MCF 10A (cell line): ENCODE measurements at regions of chr13 and their contacts with region 1.

Region 1: DNA sequence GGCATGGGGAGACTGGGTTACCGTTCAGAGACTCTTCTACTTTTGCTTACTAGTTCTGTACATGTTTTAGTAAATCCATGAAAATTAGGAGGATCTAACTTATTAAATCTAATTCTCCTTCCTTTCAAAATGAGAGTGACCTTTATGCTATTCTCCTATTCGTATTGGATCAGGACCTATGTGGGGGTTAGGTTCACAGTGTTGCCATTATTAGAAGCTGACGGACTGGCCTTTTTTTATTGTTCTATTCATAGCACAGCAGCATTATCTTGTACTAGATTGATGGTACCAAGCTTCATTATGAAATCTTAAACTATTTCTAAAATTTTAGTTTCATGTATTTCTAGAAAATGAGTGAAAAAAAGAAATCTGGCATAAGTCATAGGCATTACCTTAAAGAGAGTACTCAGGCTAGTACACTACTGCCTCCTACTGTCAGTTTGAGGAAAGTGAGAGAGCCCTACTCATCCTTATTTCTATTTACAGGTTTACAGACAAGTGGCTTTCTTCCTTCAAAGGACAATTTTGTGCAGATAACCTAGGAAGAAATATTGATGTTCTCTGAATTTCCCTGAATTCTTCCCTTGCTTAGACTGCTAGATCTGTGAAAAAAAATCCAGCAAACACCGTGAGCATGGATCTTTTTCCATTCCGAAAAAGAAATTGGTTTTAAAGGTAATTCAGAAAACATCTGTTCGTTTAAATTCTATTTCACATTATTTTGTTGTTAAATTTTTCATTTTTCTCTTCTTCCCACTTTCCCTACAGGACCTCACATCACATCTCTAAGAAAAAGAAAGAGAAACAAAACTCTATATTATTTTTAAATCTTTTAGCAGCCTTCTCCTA is 485.5 kb downstream of the DIAPH3 start:
- DNase-seq: peak; percentile 53
- H3K4me3 Mint-ChIP-seq: no peak overlapping the region
- H3K27ac Mint-ChIP-seq: no peak overlapping the region
- H3K4me1 Mint-ChIP-seq: no peaks in the 10 kb centered on the region
- H3K27me3 Mint-ChIP-seq: no peaks in the 10 kb centered on the region
- CTCF ChIP-seq: peak; percentile 47

Region 2: GRCh38 chr13:59166174-59166573 is 512.0 kb before region 1 on chr13:
- CTCF ChIA-PET with region 1: no interaction called
- POLR2A ChIA-PET with region 1: no interaction called
- intact Hi-C with region 1: no loop called
- DNase-seq: no peak
- H3K4me3 Mint-ChIP-seq: no peak overlapping the region
- H3K27ac Mint-ChIP-seq: no peak overlapping the region
- H3K4me1 Mint-ChIP-seq: no peaks in the 10 kb centered on the region
- H3K27me3 Mint-ChIP-seq: peaks cover 36% of the 10 kb centered on the region
- CTCF ChIP-seq: no peak

Region 3: DNA sequence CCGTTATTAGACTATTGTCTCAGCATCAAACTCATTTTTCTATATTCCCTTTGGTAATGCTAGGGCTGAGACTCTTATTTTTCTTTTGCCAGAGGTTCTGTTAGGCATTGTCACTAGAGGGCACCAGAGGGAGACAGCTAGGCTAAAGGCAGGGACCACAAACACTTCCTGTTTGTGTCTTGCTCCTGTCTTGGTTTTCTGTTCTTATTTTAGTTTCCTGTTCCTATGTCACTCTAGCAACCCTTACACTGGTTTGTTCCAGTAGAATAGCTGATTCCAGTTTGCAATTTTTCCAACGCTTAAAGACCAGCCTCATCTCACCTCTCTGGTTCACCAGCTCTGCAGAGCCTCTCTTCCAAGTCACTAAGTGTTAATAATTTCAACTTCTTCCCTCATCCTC is 286.5 kb before region 1 on chr13:
- CTCF ChIA-PET with region 1: interaction called, 49 read pairs
- POLR2A ChIA-PET with region 1: no interaction called
- intact Hi-C with region 1: loop called (anchors 1 kb)
- DNase-seq: peak; percentile 75
- H3K4me3 Mint-ChIP-seq: no peak overlapping the region
- H3K27ac Mint-ChIP-seq: no peak overlapping the region
- H3K4me1 Mint-ChIP-seq: no peaks in the 10 kb centered on the region
- H3K27me3 Mint-ChIP-seq: peaks cover 37% of the 10 kb centered on the region
- CTCF ChIP-seq: peak; percentile 71

Region 4: GRCh38 chr13:59771272-59771671 is 93.1 kb after region 1 on chr13:
- CTCF ChIA-PET with region 1: interaction called, 53 read pairs
- POLR2A ChIA-PET with region 1: no interaction called
- intact Hi-C with region 1: loop called (anchors 1 kb)
- DNase-seq: no peak
- H3K4me3 Mint-ChIP-seq: no peak overlapping the region
- H3K27ac Mint-ChIP-seq: no peak overlapping the region
- H3K4me1 Mint-ChIP-seq: peaks cover 12% of the 10 kb centered on the region
- H3K27me3 Mint-ChIP-seq: no peaks in the 10 kb centered on the region
- CTCF ChIP-seq: peak; percentile 39

Region 5: DNA sequence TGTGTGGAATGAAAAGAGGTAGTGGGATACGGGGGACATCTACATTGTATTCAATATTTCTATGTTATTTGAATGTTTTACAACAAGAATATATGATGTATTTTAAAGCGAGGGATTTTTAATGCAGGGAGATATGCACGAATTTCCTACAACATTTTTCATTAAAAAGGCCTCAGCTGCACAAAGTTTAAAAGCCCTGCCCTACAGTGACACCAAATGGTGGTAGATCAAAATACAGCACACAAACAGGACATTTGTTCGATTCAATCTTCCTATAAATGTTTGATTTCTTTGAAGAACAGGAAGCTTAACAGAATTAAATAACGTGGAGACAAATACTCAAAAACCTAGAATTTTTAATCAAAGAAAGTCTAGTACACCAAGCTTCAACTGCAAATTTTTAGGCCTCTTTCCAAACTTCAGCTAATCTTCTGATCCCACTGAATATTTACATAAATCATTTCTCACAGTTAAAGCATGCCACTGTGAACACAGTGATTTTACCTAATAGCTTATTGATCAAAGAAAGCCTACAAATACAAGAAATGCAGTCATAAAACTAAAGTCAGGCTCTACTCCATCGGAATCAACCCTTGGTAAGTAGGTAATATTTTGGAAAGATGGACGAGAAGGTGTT is 228.3 kb after region 1 on chr13:
- CTCF ChIA-PET with region 1: interaction called, 72 read pairs
- POLR2A ChIA-PET with region 1: interaction called, 4 read pairs
- intact Hi-C with region 1: loop called (anchors 1 kb)
- DNase-seq: peak; percentile 43
- H3K4me3 Mint-ChIP-seq: no peak overlapping the region
- H3K27ac Mint-ChIP-seq: no peak overlapping the region
- H3K4me1 Mint-ChIP-seq: peaks cover 6% of the 10 kb centered on the region
- H3K27me3 Mint-ChIP-seq: no peaks in the 10 kb centered on the region
- CTCF ChIP-seq: peak; percentile 50

Region 6: DNA sequence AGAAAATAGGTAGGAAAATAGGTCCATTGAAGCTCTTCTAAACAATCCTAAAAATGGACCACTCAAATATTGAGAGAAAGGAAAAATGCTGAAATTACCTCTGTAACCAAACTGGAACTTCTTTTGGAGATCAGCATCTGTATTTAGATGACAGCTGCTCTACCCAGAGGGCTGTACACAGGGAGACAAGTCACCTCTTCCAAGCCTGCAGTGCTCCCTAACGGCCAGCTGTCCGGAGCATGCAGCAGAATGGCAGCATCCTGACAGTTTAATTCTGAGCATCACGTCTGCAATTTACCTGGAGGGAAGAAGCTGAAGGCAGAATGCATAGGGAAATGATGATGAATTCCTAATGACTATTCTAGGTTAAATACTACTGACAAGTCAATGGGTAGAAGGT is 548.3 kb after region 1 on chr13:
- CTCF ChIA-PET with region 1: interaction called, 23 read pairs
- POLR2A ChIA-PET with region 1: no interaction called
- intact Hi-C with region 1: loop called (anchors 5 kb)
- DNase-seq: peak; percentile 33
- H3K4me3 Mint-ChIP-seq: no peak overlapping the region
- H3K27ac Mint-ChIP-seq: no peak overlapping the region
- H3K4me1 Mint-ChIP-seq: no peaks in the 10 kb centered on the region
- H3K27me3 Mint-ChIP-seq: peaks cover 24% of the 10 kb centered on the region
- CTCF ChIP-seq: peak; percentile 47

Region 7: GRCh38 chr13:60335531-60335930 is 657.3 kb after region 1 on chr13:
- CTCF ChIA-PET with region 1: interaction called, 61 read pairs
- POLR2A ChIA-PET with region 1: no interaction called
- intact Hi-C with region 1: no loop called
- DNase-seq: peak; percentile 16
- H3K4me3 Mint-ChIP-seq: no peak overlapping the region
- H3K27ac Mint-ChIP-seq: no peak overlapping the region
- H3K4me1 Mint-ChIP-seq: peaks cover 5% of the 10 kb centered on the region
- H3K27me3 Mint-ChIP-seq: peaks cover 76% of the 10 kb centered on the region
- CTCF ChIP-seq: peak; percentile 41